ENCODE measurements at regions of chr1 and their contacts with region 1.

Region 1: DNA sequence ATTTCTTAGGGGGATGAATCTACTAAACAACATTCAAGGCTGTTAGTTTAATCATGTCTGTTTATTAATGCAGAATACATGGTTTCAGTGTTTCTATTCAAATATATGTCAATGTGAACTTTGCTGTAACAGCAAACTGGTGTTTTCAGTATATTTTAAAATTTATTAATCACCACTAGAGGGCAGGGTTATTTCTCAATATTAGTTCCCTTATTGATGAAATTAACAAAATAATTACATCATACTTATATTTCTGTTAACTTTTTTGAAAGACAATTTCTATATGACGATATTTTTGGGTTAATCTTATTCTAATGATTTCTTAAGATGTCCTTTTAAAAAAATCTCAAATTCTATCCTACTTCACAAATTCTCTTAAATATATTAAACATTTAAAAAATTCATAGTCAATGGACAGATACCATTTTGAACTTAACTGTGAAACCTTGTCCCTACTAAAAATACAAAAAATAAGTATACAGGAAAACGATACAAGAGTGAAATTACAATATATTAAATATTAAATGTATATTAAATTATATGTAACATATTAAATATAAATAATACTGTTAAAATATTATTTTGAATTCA is 1034.1 kb upstream of the PRMT6 start:
- DNase-seq: peak; percentile 20
- H3K4me3 Mint-ChIP-seq: no peak overlapping the region
- H3K27ac Mint-ChIP-seq: no peak overlapping the region
- H3K4me1 Mint-ChIP-seq: peaks cover 7% of the 10 kb centered on the region
- H3K27me3 Mint-ChIP-seq: no peaks in the 10 kb centered on the region
- CTCF ChIP-seq: peak; percentile 33

Region 2: DNA sequence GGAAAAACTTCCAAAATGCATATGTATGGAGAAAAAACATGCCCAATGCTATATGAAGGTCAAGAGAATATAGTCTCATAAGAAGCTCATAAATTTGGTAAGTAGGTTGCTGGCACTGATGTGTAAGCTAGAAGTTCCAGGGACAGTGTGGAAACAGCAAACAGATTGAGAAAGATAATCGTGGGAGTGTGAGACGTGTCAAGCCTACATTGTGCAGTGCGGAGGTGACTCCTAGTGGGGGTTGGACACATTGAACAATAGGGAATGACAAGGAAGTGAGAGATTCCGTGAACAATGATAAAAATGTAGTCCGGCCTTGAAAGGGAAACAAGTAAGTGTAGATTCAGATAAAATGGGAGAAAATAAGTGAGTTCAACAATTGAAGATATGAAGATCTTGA is 245.6 kb after region 1 on chr1:
- CTCF ChIA-PET with region 1: no interaction called
- POLR2A ChIA-PET with region 1: no interaction called
- intact Hi-C with region 1: loop called (anchors 5 kb)
- DNase-seq: peak; percentile 71
- H3K4me3 Mint-ChIP-seq: no peak overlapping the region
- H3K27ac Mint-ChIP-seq: no peak overlapping the region
- H3K4me1 Mint-ChIP-seq: peaks cover 10% of the 10 kb centered on the region
- H3K27me3 Mint-ChIP-seq: no peaks in the 10 kb centered on the region
- CTCF ChIP-seq: peak; percentile 49

Region 3: DNA sequence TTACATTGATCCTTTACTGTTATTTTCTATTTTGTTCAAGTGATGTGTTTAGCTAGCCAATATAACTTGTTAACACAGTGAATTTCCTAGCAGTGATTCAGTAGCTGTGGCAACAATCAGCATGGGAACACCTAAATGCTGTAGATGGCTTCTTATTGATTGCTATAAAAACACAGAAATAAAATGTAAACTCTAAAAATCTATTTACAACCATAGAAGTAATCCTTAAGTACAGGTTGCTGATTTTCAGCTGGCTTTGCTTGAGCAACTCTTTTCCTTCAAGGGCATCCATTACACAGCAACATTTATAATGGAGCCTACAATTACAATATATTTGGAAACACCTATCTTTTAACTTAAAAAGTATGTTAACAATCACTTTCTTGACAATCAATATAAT is 360.4 kb after region 1 on chr1:
- CTCF ChIA-PET with region 1: no interaction called
- POLR2A ChIA-PET with region 1: no interaction called
- intact Hi-C with region 1: no loop called
- DNase-seq: no peak
- H3K4me3 Mint-ChIP-seq: no peak overlapping the region
- H3K27ac Mint-ChIP-seq: no peak overlapping the region
- H3K4me1 Mint-ChIP-seq: no peaks in the 10 kb centered on the region
- H3K27me3 Mint-ChIP-seq: no peaks in the 10 kb centered on the region
- CTCF ChIP-seq: no peak

Region 4: DNA sequence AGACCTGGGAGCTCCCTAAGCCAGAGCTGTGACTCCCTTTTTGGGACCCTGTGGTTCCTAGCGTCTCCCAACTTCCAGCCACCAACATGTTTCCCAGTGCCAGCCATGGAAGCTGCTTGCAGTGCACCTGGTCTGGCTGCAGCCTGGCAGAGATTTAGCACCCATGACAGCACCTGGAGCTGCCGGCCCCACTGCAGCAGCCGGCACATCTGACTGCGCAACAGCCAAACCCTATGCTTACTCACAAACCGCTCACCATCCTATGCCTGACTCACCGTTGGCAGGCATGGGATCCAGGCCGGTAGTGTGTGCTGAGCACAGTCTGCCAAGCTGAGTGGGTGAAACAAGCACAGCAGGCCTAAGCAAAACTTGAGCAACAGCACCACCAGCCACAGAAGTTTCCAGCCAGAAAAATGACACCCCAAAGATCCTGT is 598.1 kb after region 1 on chr1:
- CTCF ChIA-PET with region 1: no interaction called
- POLR2A ChIA-PET with region 1: no interaction called
- intact Hi-C with region 1: loop called (anchors 1 kb)
- DNase-seq: peak; percentile 97
- H3K4me3 Mint-ChIP-seq: no peak overlapping the region
- H3K27ac Mint-ChIP-seq: peak overlapping the region; percentile 47
- H3K4me1 Mint-ChIP-seq: peaks cover 12% of the 10 kb centered on the region
- H3K27me3 Mint-ChIP-seq: no peaks in the 10 kb centered on the region
- CTCF ChIP-seq: peak; percentile 20

Measured in MCF 10A (cell line).